Activated CD4-positive, alpha-beta memory T cell treated with anti-CD3 and anti-CD28 coated beads for 36 hours (primary cell): ENCODE measurements at regions of chr9 and their contacts with region 1.

Region 1: GRCh38 chr9:95127249-95128176 is 190.0 kb downstream of the FANCC start:
- DNase-seq: peak; percentile 84
- H3K4me3 Mint-ChIP-seq: no peak overlapping the region
- H3K27ac Mint-ChIP-seq: no peak overlapping the region
- H3K4me1 Mint-ChIP-seq: no peaks in the 10 kb centered on the region
- H3K27me3 Mint-ChIP-seq: no peaks in the 10 kb centered on the region

Region 2: DNA sequence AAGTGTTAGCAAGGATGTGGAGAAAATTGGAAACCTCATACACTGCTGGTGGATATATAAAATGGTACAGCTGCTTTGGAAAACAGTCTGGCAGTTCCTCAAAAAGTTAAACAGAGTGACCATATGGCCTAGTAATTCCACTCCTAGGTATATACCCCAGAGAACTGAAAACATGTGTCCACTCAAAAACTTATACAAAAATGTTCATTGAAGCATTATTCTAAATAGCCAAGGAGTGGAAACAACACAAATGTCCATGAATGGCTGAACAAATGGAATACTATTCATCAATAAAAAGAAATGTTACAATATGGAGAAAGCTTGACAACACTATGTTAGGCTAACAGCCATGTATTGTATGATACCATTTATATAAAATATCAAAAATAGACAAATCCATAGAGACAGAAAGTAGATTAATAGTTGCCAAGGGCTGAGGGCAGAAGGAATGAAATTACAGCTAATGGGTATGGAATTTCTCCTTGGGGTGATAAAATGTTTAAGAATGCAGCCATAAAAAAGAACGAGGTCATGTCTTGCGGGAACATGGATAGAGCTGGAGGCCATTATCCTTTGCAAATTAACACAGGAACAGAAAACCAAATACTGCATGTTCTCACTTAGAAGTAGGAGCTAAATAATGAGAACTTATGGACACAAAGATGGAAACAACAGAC is 454.6 kb before region 1 on chr9:
- CTCF ChIA-PET with region 1: interaction called, 348 read pairs
- POLR2A ChIA-PET with region 1: interaction called, 5 read pairs
- intact Hi-C with region 1: loop called (anchors 5 kb)
- DNase-seq: no peak
- H3K4me3 Mint-ChIP-seq: no peak overlapping the region
- H3K27ac Mint-ChIP-seq: no peak overlapping the region
- H3K4me1 Mint-ChIP-seq: peaks cover 7% of the 10 kb centered on the region
- H3K27me3 Mint-ChIP-seq: peaks cover 5% of the 10 kb centered on the region

Region 3: DNA sequence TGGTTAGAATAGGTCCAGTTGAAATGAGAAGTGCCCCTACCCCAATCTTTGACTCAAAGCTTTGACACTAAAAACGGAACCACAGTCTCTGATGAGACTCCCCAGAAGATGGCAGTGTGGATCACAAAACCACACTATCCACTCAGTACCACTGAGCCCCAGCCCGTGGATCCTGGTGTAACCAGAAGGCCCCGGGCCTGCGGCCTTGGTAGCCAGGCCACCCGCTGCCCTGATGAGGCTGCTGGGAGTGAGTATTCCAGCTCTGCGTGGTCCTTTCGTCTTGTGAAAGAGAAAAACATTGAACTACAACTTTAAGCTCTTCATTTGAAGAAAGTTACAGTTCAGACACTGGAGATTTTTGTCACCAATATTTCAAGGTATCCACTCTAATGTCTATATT is 446.0 kb before region 1 on chr9:
- CTCF ChIA-PET with region 1: interaction called, 348 read pairs
- POLR2A ChIA-PET with region 1: interaction called, 3 read pairs
- intact Hi-C with region 1: loop called (anchors 1 kb)
- DNase-seq: peak; percentile 68
- H3K4me3 Mint-ChIP-seq: no peak overlapping the region
- H3K27ac Mint-ChIP-seq: no peak overlapping the region
- H3K4me1 Mint-ChIP-seq: no peaks in the 10 kb centered on the region
- H3K27me3 Mint-ChIP-seq: peaks cover 9% of the 10 kb centered on the region

Region 4: DNA sequence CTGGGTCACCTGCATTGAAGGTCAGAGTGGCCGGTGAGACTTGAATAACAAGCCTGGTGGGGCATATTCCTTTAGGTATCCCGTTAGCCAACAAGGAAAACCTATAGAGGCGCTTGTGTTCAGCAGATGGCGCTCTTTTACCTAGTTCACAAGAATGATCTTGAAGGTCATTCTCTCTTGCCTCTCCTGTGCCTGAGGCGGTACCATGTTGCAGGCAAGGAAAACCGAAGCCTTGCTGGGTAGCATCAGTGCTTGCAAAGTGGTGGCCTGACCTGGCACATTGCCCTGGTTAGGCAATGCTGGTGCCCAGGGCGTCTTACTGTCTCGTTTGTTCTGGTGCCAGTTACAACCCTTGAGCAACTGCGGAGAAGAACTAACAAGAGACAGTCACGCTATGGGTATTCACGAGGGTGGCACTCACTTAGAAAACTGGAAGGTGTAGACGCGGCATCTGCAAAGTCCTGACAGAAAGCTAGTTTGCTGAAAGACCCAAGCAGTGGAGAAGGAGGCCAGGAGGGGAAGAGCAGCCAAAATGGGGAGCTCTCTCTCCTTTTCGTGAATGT is 344.3 kb before region 1 on chr9:
- CTCF ChIA-PET with region 1: interaction called, 147 read pairs
- POLR2A ChIA-PET with region 1: interaction called, 3 read pairs
- intact Hi-C with region 1: loop called (anchors 1 kb)
- DNase-seq: peak; percentile 53
- H3K4me3 Mint-ChIP-seq: no peak overlapping the region
- H3K27ac Mint-ChIP-seq: no peak overlapping the region
- H3K4me1 Mint-ChIP-seq: peaks cover 14% of the 10 kb centered on the region
- H3K27me3 Mint-ChIP-seq: no peaks in the 10 kb centered on the region

Region 5: GRCh38 chr9:95116003-95116807 is 11.3 kb before region 1 on chr9:
- CTCF ChIA-PET with region 1: interaction called, 16 read pairs
- POLR2A ChIA-PET with region 1: no interaction called
- intact Hi-C with region 1: no loop called
- DNase-seq: no peak
- H3K4me3 Mint-ChIP-seq: no peak overlapping the region
- H3K27ac Mint-ChIP-seq: no peak overlapping the region
- H3K4me1 Mint-ChIP-seq: no peaks in the 10 kb centered on the region
- H3K27me3 Mint-ChIP-seq: no peaks in the 10 kb centered on the region

Region 6: DNA sequence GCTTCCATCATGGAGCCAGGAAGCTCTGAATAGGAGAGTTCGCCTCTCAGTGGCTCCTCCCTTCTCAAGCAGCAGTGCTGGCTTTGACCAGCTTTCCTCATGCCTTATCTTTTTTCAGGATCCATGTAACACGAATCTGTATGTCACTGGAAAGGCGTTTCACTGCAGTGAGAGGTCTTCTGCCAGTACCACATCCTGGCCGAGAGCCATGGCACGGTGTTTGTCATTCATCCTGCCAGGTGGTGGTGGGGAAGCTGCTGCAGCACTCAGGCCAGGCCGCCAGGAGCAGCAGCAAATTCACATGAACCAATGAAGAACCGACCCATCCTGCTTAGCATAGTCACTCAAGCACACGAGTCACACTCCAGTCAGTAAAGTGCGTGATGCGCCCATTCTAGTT is 11.0 kb after region 1 on chr9:
- CTCF ChIA-PET with region 1: interaction called, 17 read pairs
- POLR2A ChIA-PET with region 1: no interaction called
- intact Hi-C with region 1: no loop called
- DNase-seq: no peak
- H3K4me3 Mint-ChIP-seq: no peak overlapping the region
- H3K27ac Mint-ChIP-seq: no peak overlapping the region
- H3K4me1 Mint-ChIP-seq: no peaks in the 10 kb centered on the region
- H3K27me3 Mint-ChIP-seq: no peaks in the 10 kb centered on the region

Region 7: GRCh38 chr9:95143591-95144561 is 16.4 kb after region 1 on chr9:
- CTCF ChIA-PET with region 1: interaction called, 17 read pairs
- POLR2A ChIA-PET with region 1: no interaction called
- intact Hi-C with region 1: no loop called
- DNase-seq: no peak
- H3K4me3 Mint-ChIP-seq: no peak overlapping the region
- H3K27ac Mint-ChIP-seq: no peak overlapping the region
- H3K4me1 Mint-ChIP-seq: peaks cover 2% of the 10 kb centered on the region
- H3K27me3 Mint-ChIP-seq: no peaks in the 10 kb centered on the region

Region 8: DNA sequence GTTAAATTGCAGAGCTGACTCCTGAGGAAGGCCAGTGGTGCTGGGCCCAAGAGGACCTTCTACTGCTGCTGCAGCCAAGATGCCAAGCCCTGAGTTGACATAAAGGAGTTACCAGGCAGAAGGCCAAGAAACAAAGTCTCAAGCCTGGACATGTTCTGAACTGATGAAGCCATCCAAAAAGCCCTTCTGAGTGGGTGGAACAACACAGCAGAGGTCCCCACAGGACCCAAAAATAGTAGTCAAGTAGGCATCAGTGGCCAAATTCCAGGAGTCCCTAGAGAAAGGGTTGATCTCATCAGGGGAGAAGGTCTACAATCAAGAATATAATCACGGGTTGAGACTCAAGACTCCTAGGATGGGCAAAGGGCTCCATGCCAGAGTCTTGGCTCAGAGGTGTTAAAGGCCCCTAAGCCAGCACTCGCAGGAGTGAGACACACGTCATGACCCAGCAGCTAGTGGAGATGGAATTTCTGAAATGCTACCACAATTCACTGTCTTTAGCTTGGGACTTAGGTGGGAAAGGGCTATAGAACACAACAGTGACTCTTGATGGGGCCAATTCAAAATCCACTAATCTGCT is 70.3 kb after region 1 on chr9:
- CTCF ChIA-PET with region 1: no interaction called
- POLR2A ChIA-PET with region 1: no interaction called
- intact Hi-C with region 1: no loop called
- DNase-seq: no peak
- H3K4me3 Mint-ChIP-seq: no peak overlapping the region
- H3K27ac Mint-ChIP-seq: no peak overlapping the region
- H3K4me1 Mint-ChIP-seq: no peaks in the 10 kb centered on the region
- H3K27me3 Mint-ChIP-seq: no peaks in the 10 kb centered on the region

Region 9: GRCh38 chr9:95264954-95265615 is 137.6 kb after region 1 on chr9:
- CTCF ChIA-PET with region 1: no interaction called
- POLR2A ChIA-PET with region 1: no interaction called
- intact Hi-C with region 1: no loop called
- DNase-seq: no peak
- H3K4me3 Mint-ChIP-seq: no peak overlapping the region
- H3K27ac Mint-ChIP-seq: no peak overlapping the region
- H3K4me1 Mint-ChIP-seq: peaks cover 6% of the 10 kb centered on the region
- H3K27me3 Mint-ChIP-seq: no peaks in the 10 kb centered on the region

Region 10: DNA sequence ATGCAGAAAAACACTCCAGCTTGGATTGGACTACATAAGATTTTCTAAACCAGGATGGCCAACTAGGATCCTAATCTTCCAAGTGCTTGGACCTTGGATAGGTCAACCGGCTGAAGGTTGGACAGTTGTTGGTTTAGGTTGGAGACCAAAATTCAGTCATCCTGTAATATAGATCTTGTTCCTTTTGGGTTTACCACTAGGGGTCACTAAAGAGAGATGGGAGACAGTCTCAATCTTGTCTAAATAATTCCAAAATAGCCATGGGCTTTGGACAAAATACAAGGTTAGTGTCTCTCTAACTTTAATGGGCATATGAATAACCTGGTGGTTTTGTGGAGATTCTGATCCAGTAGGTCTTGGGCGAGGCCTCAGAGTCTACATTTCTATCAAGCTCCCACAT is 599.2 kb after region 1 on chr9:
- CTCF ChIA-PET with region 1: no interaction called
- POLR2A ChIA-PET with region 1: no interaction called
- intact Hi-C with region 1: no loop called
- DNase-seq: no peak
- H3K4me3 Mint-ChIP-seq: no peak overlapping the region
- H3K27ac Mint-ChIP-seq: no peak overlapping the region
- H3K4me1 Mint-ChIP-seq: peaks cover 38% of the 10 kb centered on the region
- H3K27me3 Mint-ChIP-seq: peaks cover 15% of the 10 kb centered on the region

Region 11: GRCh38 chr9:95864852-95865580 is 737.5 kb after region 1 on chr9:
- CTCF ChIA-PET with region 1: no interaction called
- POLR2A ChIA-PET with region 1: no interaction called
- intact Hi-C with region 1: no loop called
- DNase-seq: no peak
- H3K4me3 Mint-ChIP-seq: no peak overlapping the region
- H3K27ac Mint-ChIP-seq: no peak overlapping the region
- H3K4me1 Mint-ChIP-seq: peaks cover 6% of the 10 kb centered on the region
- H3K27me3 Mint-ChIP-seq: no peaks in the 10 kb centered on the region